ENCODE measurements at regions of chr1 and their contacts with region 1.

Region 1: DNA sequence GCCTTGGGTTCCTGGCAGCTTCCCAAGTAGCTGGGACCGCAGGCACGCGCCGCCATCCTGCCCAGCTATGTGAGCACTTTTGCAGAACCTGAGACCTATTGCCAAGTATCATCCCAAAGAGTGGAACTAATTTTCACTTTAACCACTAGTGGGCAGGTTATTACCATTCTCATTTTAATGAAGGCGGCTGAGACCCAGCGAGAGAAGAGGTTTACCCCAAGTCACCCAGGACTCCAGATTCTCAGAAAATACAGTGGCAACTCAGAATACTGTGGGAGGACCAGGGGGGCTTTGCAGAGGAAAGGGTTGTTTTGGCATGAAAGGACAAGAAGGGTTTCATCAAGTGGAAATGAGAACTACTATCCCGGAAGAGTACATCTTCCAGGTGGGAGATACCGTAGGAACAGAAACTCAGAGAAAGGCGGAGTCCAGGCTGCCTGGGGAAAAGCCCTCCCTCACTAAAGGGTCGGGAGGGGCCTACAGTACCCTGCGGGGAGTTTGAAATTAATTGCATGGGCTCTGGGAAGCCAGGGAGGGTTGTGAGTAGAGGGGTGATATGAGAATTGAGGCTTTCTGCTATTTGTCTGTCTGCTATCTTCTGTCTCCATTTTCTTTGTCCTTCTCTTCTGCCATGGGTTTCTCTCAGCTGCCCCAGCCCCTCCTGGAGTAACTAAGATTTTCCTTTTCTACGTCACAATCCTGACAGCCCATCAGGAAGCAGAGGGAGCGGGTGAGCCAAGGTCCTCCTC is 7.2 kb upstream of the SEMA4A start:
- DNase-seq: peak; percentile 78
- H3K4me3 ChIP-seq: no peak overlapping the region
- H3K27me3 ChIP-seq: no peaks in the 10 kb centered on the region; the same call in none of the 2 replicates
- CTCF ChIP-seq: peak; percentile 73

Region 2: DNA sequence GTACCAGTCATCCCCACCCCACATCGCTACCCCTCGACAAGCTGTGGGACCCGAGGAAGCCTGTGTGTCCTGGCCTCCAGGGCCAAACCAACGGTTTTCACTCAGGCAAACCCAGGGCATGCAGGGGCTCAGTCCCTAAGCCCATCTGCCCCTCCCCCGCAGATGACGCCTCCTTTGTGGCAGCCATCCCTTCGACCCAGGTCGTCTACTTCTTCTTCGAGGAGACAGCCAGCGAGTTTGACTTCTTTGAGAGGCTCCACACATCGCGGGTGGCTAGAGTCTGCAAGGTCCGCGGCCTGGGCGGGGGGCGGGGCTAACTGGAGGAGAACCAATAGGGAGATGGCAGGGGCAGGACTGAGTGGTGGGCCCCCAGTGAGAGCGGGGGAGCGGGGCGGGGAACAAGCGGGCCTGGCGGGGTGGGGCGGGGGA is 14.6 kb after region 1 on chr1:
- CTCF ChIA-PET with region 1: no interaction called
- POLR2A ChIA-PET with region 1: interaction called, 11 read pairs
- DNase-seq: no peak
- H3K4me3 ChIP-seq: peak overlapping the region; percentile 8; the same call in 1 of the 2 replicates
- H3K27me3 ChIP-seq: no peaks in the 10 kb centered on the region
- CTCF ChIP-seq: no peak